ENCODE measurements at regions of chr1 and their contacts with region 1.

Region 1: DNA sequence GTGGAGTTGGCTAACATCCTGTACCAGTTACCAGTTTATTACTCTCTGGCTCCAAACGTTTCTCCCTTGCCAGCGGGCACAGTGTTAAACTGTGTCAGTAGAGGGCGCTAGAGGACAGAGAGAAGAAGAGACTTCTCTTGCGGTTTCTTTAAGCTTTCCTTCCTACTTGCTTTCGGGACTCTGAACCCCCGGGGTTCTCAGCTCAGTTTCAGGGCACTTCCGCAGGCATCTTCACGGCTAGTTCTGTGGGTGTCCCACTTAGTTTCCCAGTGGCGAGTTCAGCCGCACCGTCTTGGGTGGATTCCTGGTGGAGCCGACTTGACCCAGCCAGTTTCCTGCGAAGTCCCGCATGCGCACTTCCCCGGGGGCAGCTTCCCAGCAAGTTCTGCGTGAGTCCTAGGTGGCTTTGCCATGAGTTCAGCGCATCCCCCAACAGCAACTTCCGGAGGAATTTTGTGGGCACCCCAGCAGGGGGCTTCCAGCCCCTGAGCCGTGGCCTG is 37.9 kb upstream of the BTG2 start:
- DNase-seq: peak; percentile 89
- ATAC-seq: peak; percentile 89

Region 2: GRCh38 chr1:202976633-202977032 is 290.8 kb before region 1 on chr1:
- intact Hi-C with region 1: no loop called
- DNase-seq: no peak
- ATAC-seq: no peak

Region 3: DNA sequence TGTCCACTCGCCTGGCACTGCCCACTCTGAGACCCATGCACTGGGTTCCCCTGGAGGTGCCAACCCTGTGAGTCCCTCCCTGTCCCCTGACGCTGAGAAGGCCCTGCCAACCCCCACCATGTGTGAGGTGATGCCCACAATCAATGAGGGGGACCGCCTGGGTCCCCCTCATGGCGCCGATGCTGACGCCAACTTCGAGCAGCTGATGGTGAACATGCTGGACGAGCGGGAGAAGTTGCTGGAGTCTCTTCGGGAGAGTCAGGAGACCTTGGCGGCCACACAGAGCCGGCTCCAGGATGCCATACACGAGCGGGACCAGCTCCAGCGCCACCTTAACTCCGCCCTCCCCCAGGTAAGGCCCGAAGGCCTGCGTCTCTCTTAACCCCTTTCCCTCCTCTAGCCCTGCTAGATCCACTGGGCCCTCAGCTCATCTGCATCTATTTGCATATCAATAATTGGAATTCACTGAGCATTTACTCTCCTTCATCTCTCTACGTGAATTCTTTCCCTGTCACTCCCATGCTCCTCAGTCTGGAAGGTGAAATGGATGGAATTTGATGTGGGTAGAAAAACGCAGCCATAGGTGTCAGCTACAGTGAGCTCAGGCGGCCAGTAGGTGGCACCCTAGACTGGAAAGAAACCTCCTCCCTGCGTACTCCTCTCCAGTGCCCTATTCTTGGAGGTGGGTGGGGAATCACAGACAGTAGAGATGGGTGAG is 228.3 kb before region 1 on chr1:
- intact Hi-C with region 1: loop called (anchors 5 kb)
- DNase-seq: peak; percentile 88
- ATAC-seq: peak; percentile 87

Region 4: GRCh38 chr1:203463469-203464062 is 196.2 kb after region 1 on chr1:
- intact Hi-C with region 1: no loop called
- DNase-seq: no peak
- ATAC-seq: peak; percentile 23

Region 5: GRCh38 chr1:203486618-203487370 is 219.4 kb after region 1 on chr1:
- intact Hi-C with region 1: loop called (anchors 5 kb)
- DNase-seq: no peak
- ATAC-seq: peak; percentile 26

Region 6: DNA sequence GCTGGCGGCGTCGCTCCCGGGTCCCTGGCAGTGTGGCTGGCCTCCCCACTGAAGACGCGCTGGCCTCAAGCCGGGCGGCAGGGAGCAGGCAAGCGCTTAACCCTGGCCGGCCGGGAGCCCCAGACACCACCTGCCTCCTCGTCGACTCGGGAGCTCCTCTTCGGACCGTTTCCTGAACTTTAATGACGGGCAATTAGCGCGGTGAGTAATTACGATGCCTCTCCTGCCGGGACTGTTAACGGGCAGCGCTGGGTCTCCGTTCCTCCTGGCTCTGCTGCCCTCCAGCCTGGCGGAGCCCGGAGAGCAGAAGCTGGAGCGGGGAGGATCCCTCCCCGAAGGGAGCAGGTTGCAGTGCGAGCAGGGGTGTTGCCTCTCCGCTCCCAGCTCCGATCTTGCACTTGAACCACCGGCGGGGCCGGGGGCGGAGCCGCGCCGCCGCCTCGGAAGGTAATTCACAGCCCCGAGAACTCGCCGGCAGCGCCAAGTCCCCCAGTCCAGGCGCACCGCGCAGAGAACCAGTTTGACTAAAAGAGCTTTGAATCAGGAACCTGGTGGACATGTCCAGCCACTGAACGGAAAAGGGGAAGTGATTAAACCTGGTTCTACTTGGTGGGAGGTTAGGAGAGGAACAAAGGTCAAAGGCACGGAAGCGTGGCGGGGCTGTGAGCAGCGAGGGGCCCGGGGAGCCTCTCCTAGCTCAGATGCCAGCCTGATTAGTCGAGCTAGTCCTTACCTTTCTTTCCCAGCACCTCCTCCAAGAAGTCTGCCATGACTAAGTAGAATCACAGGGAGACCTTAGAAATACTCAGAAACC is 1110.6 kb after region 1 on chr1:
- intact Hi-C with region 1: no loop called
- DNase-seq: peak; percentile 51
- ATAC-seq: peak; percentile 62